ENCODE measurements at regions of chr3 and their contacts with region 1.

Region 1: DNA sequence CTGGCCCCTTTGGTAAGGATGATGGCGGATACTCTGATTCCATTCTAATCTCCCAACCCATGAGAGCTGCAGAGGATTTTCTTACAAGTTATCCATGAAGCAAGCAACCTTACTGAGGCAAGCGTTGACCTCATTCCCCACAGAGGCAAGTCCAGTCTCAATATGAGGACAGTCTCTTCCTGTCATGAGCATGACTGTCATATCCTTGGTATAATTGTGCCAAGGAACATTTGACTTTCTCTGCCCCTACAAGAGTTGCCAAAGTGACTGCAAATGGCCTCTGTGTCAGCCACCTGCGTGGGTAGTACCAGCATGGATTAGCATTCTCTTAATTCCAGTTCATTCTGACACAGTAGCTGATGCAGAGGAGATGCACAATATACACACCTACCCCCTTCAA is 71.2 kb upstream of the TMEM158 start:
- DNase-seq: no peak
- H3K4me3 ChIP-seq: no peak overlapping the region
- CTCF ChIP-seq: no peak

Region 2: GRCh38 chr3:45236964-45237363 is 60.4 kb before region 1 on chr3:
- in situ Hi-C with region 1: no loop called
- DNase-seq: no peak
- H3K4me3 ChIP-seq: no peak overlapping the region
- CTCF ChIP-seq: no peak

Region 3: GRCh38 chr3:45333549-45333948 is 36.2 kb after region 1 on chr3:
- in situ Hi-C with region 1: no loop called
- DNase-seq: peak; percentile 20
- H3K4me3 ChIP-seq: no peak overlapping the region
- CTCF ChIP-seq: peak; percentile 20

Region 4: GRCh38 chr3:45343947-45344346 is 46.6 kb after region 1 on chr3:
- in situ Hi-C with region 1: loop called (anchors 5 kb)
- DNase-seq: no peak
- H3K4me3 ChIP-seq: no peak overlapping the region
- CTCF ChIP-seq: no peak